ENCODE measurements at regions of chr1 and their contacts with region 1.

Region 1: DNA sequence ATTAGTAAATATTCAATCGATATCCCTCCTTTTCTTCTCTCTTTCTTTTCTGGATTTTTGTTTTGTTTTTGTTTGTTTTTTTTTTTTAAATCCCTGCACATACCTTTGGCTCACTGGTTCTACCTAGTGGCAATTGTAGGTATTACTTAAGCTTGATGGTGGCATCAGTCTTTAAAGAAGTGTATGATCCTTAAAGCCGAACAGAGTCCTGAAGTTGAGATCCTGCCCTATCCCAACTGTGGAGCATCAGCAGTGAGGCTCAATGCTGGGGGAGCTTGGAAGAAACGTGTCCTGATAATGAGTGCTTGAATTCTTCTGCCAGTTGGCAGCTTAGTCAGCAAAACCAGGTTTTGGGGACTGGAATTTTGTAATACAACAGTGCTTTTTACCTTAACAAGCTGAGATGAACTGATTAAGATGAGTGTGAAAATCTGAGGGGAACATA is 60.8 kb downstream of the FASLG start:
- DNase-seq: no peak
- H3K4me3 ChIP-seq: no peak overlapping the region
- H3K27ac ChIP-seq: no peak overlapping the region
- H3K4me1 ChIP-seq: peaks cover 0 to 30% (median 18%) of the 10 kb centered on the region in 6 donors
- H3K27me3 ChIP-seq: no peaks in the 10 kb centered on the region
- CTCF ChIP-seq: peak; percentile 62 to 92 (median 76)
- POLR2A ChIP-seq: no peak

Region 2: DNA sequence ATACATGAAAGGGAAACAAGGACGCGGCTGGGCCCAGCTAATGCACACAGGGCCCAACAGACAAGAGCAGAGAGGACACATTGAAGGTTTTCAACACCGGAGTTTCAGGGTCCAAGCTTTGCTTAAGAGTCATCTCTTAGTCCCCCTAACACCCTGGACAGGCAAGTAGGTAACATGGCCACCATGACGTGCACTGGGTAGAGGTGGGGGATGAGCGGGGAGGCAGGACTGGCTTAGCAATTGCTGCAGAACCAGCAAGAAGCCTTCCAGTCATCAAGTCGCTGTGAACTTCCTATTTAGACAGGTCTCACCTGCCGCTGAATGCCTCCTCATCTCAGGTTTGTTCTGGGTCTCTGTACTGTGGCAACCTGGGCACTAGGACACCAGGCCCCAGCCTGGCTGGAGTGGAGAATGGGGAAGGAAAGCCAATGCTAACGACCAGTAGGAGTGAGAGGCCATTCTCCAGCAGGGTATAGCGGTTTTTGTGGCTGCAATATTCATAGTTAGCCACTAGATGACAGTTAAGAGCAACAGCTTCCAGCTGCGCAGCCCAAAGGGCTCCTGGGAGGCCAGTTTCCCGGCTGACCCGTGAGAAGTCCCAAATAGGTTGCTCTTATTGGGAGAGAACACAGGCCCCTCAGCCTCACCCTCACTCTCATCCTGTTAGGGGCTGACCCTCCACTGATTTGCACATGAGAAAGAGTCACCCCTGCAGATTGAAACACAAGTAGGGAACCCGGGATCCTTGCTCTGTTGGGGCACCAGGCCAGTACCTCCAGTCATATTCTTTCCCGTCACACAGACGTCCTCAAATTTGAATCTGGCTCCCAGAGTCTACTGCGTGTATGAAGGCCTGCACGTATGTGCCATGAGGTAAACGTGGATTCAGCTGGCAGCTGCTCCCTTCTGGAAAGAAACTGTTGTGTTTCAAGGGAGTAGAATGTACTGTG is 269.9 kb before region 1 on chr1:
- intact Hi-C with region 1: loop called (anchors 5 kb)
- DNase-seq: peak; percentile 81
- H3K4me3 ChIP-seq: peak overlapping the region in 1 of 8 donors; percentile 33
- H3K27ac ChIP-seq: peak overlapping the region in 2 of 8 donors; percentile 19 to 37
- H3K4me1 ChIP-seq: peaks cover 0 to 26% (median 10%) of the 10 kb centered on the region in 6 donors
- H3K27me3 ChIP-seq: no peaks in the 10 kb centered on the region
- CTCF ChIP-seq: peak; percentile 64 to 87 (median 80)
- POLR2A ChIP-seq: no peak

Region 3: GRCh38 chr1:172627702-172628101 is 92.0 kb before region 1 on chr1:
- intact Hi-C with region 1: loop called (anchors 10 kb)
- DNase-seq: no peak
- H3K4me3 ChIP-seq: no peak overlapping the region
- H3K27ac ChIP-seq: peak overlapping the region in 3 of 8 donors; percentile 2 to 28 (median 28)
- H3K4me1 ChIP-seq: peaks cover 0 to 29% (median 2%) of the 10 kb centered on the region in 6 donors
- H3K27me3 ChIP-seq: no peaks in the 10 kb centered on the region
- CTCF ChIP-seq: no peak
- POLR2A ChIP-seq: no peak